ENCODE measurements at regions of chr3 and their contacts with region 1.

Region 1: DNA sequence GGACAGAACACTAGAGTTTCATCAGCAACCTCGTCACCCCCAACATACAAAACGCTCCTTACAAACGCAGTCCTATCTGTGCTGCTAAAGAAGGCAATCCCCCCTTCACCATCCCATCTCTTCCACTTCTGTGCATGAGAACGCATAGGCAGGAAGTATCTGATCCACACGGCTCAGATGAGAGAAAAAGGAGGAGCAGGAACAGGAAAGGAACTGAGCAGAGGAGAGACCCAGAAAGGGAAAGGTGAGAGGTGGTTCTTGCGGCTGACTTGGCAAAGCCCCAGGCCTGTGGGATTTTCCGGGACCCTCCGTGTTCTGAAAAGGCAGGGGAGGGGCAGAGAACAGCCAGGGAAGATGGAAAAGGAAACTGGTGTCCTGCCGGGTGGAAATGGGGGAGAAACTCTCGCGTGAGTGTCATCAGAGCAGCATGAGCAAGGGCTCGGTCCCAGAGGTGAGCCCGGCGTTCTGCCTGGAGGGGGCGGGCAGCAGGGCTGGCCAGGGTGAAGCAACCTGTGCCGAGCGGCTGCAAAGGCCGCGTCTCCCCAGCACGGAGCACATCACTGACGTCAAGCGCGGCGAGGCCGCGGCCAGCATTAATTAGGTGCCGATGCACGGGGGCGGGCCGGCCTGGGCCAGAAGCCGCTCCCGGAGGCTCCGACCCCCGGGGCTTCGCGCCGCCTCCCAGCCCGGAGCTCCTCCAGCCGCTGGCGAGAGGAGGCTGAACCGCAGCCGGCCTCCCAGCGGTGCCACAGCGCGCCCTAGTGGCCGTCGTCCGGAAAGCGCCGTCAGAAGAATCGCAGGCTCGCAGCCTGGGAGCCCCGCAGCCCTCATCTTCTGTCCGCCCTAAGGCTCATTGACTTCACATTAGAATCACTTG is 35.8 kb downstream of the CPN2 start:
- DNase-seq: peak; percentile 88
- H3K4me3 Mint-ChIP-seq: peak overlapping the region; percentile 69
- H3K27ac Mint-ChIP-seq: peak overlapping the region; percentile 68
- H3K4me1 Mint-ChIP-seq: peaks cover 57% of the 10 kb centered on the region
- H3K27me3 Mint-ChIP-seq: peaks cover 33% of the 10 kb centered on the region

Region 2: GRCh38 chr3:193665370-193665989 is 649.8 kb before region 1 on chr3:
- CTCF ChIA-PET with region 1: interaction called, 70 read pairs
- POLR2A ChIA-PET with region 1: interaction called, 10 read pairs
- DNase-seq: no peak
- H3K4me3 Mint-ChIP-seq: no peak overlapping the region
- H3K27ac Mint-ChIP-seq: no peak overlapping the region
- H3K4me1 Mint-ChIP-seq: peaks cover 3% of the 10 kb centered on the region
- H3K27me3 Mint-ChIP-seq: no peaks in the 10 kb centered on the region

Region 3: GRCh38 chr3:193788189-193788991 is 526.9 kb before region 1 on chr3:
- CTCF ChIA-PET with region 1: interaction called, 27 read pairs
- POLR2A ChIA-PET with region 1: no interaction called
- DNase-seq: peak; percentile 29
- H3K4me3 Mint-ChIP-seq: no peak overlapping the region
- H3K27ac Mint-ChIP-seq: no peak overlapping the region
- H3K4me1 Mint-ChIP-seq: no peaks in the 10 kb centered on the region
- H3K27me3 Mint-ChIP-seq: peaks cover 60% of the 10 kb centered on the region

Region 4: DNA sequence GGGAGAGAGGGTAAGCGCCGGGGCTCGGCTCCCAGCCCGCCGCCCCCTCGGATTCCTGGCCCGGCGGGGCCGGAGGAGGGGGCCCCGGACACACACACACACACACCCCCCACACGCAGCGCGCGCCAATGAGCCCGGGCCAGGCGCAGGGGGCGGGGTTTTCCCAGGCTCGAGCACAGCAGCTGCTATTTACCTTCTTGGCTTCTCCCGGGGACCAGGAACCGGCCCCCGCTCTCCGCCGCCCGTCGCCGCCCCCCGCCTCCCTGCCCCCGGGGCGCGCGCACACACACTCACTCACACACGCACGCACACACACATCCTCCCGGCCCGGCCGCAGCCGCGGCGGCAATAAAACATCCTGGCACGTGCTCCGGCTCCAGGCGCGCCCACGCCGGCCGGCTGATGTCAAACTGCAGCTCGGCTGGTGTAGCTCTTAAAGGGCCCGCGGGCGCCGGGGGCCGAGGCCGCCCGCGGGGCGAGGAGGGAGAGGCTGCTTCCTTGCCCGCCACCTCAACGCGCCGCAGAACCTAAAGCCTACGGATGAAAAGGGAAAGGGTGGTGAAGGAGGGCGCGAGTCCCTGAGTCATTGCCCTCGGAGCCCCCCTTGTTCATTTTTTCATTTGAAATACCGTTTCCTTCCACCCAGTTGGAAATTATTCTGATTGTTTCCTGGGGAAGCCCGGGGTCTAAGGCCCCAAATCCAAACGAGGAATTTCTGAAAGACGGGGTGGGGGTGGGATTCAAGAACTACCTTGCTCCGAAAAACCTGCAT is 180.4 kb before region 1 on chr3:
- CTCF ChIA-PET with region 1: interaction called, 92 read pairs
- POLR2A ChIA-PET with region 1: interaction called, 85 read pairs
- DNase-seq: peak; percentile 89
- H3K4me3 Mint-ChIP-seq: peak overlapping the region; percentile 82
- H3K27ac Mint-ChIP-seq: peak overlapping the region; percentile 78
- H3K4me1 Mint-ChIP-seq: peaks cover 77% of the 10 kb centered on the region
- H3K27me3 Mint-ChIP-seq: peaks cover 73% of the 10 kb centered on the region

Region 5: DNA sequence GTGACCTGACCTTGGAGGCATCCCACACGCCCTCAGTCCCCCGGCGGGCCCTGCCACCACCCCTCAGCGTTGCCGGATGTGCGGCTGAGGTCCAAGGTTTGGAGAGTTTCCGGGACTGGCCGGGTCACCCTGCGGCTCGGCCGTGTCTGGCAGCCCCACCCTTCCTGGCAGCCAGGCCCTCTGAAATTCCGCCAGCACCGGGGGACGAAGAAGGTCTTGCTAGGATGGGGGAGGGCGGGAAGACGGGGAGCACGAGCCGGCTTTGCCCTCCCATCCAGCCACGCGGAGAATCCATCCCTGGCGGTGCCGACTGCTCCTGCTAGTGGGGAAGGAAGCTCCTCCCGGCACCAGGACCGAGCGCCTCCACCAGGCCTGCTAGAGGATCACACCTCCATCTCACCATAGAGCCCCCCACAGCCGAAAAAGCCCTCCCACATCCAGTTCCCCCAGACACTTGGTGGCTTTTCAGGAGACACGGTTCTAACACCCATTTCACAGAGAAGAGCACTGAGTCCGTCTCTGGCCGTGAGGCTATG is 45.6 kb before region 1 on chr3:
- CTCF ChIA-PET with region 1: interaction called, 10 read pairs
- POLR2A ChIA-PET with region 1: interaction called, 4 read pairs
- DNase-seq: no peak
- H3K4me3 Mint-ChIP-seq: no peak overlapping the region
- H3K27ac Mint-ChIP-seq: peak overlapping the region; percentile 1
- H3K4me1 Mint-ChIP-seq: peaks cover 31% of the 10 kb centered on the region
- H3K27me3 Mint-ChIP-seq: peaks cover 22% of the 10 kb centered on the region

Region 6: DNA sequence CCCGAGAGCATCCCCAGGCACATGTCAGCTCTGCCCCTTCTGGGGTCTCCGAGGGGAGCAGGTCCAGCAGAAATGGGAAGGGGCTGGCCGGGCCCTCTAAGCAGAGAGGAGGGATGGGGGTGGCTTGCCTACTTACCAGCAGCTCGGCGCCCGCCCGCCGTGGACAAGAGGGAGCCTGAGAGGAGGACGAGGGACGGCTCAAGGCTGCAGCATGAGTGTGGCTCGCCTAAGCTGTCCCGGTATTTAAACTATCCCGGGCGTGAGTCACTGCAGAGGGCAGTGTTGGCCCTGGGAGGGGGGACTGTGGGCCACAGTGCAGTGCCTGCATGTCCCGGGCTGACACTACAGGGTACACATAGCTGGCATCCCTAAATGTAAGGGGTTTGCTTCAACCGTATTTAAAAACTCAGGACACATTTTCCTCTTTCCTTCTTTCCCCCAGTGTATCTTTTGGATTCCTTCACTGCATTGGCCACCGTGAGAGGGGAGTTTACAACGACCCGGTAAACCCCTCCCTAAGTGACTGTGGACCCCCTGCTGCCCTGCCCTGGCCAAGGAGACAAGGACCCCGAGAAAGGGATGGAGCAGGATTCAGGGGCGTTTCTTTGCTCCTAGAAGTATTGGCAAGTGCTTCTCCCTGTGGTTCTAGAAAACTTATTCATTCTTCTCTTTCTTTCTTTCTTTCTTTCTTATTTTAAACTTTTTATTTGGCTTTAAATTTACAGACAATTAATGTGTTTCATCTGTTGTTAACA is 54.4 kb after region 1 on chr3 and contains the start of gene LRRC15:
- CTCF ChIA-PET with region 1: no interaction called
- POLR2A ChIA-PET with region 1: no interaction called
- DNase-seq: no peak
- H3K4me3 Mint-ChIP-seq: no peak within 1 kb of the TSS
- H3K27ac Mint-ChIP-seq: no peak within 1 kb of the TSS
- H3K4me1 Mint-ChIP-seq: no peaks in the 10 kb centered on the region
- H3K27me3 Mint-ChIP-seq: peaks cover 36% of the 10 kb centered on the region
- total RNA-seq, gene LRRC15: not detected